Activated CD4-positive, alpha-beta memory T cell treated with anti-CD3 and anti-CD28 coated beads for 36 hours (primary cell): ENCODE measurements at regions of chr2 and their contacts with region 1.

Region 1: GRCh38 chr2:191013932-191014652 is at the start of gene STAT1:
- DNase-seq: peak; percentile 97
- H3K4me3 Mint-ChIP-seq: no peak within 1 kb of the TSS
- H3K27ac Mint-ChIP-seq: no peak within 1 kb of the TSS
- H3K4me1 Mint-ChIP-seq: peaks cover 39% of the 10 kb centered on the region
- H3K27me3 Mint-ChIP-seq: no peaks in the 10 kb centered on the region
- total RNA-seq, gene STAT1: 309 to 314 TPM

Region 2: GRCh38 chr2:190979906-190980629 is 34.0 kb before region 1 on chr2:
- CTCF ChIA-PET with region 1: no interaction called
- POLR2A ChIA-PET with region 1: interaction called, 3 read pairs
- intact Hi-C with region 1: loop called (anchors 5 kb)
- DNase-seq: no peak
- H3K4me3 Mint-ChIP-seq: no peak overlapping the region
- H3K27ac Mint-ChIP-seq: peak overlapping the region; percentile 54
- H3K4me1 Mint-ChIP-seq: peaks cover 61% of the 10 kb centered on the region
- H3K27me3 Mint-ChIP-seq: no peaks in the 10 kb centered on the region

Region 3: DNA sequence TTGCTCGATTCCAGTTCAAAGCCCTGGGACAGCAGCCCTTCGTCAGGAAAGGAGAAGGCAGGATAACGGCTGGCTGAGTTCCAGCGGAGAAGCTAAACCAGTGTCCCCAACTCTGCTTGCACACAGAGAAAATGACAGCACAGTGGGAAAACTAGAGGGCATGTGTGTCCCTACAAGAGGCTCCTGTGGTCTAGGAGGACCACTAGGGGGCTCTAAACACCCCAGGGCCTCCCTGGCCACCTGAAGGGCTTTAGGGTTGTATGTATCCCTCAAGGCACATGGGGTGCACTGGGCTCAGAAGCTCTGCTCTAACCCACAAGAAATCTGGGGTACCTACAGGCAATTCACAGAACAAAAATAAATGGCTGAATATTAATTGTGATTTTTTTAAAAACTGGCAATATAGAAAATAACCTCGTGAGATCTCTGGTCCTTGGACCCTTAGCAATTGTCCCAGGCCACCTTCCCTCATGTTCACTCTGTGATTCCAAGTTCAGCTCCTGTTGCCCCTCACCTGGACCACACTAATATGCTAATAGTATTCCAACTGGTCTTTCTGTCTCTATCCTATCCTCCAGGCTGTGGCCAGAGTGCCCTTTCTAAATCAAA is 17.6 kb before region 1 on chr2:
- CTCF ChIA-PET with region 1: interaction called, 4 read pairs
- POLR2A ChIA-PET with region 1: interaction called, 5 read pairs
- intact Hi-C with region 1: loop called (anchors 1 kb)
- DNase-seq: no peak
- H3K4me3 Mint-ChIP-seq: no peak overlapping the region
- H3K27ac Mint-ChIP-seq: peak overlapping the region; percentile 86
- H3K4me1 Mint-ChIP-seq: peaks cover 52% of the 10 kb centered on the region
- H3K27me3 Mint-ChIP-seq: no peaks in the 10 kb centered on the region

Region 4: DNA sequence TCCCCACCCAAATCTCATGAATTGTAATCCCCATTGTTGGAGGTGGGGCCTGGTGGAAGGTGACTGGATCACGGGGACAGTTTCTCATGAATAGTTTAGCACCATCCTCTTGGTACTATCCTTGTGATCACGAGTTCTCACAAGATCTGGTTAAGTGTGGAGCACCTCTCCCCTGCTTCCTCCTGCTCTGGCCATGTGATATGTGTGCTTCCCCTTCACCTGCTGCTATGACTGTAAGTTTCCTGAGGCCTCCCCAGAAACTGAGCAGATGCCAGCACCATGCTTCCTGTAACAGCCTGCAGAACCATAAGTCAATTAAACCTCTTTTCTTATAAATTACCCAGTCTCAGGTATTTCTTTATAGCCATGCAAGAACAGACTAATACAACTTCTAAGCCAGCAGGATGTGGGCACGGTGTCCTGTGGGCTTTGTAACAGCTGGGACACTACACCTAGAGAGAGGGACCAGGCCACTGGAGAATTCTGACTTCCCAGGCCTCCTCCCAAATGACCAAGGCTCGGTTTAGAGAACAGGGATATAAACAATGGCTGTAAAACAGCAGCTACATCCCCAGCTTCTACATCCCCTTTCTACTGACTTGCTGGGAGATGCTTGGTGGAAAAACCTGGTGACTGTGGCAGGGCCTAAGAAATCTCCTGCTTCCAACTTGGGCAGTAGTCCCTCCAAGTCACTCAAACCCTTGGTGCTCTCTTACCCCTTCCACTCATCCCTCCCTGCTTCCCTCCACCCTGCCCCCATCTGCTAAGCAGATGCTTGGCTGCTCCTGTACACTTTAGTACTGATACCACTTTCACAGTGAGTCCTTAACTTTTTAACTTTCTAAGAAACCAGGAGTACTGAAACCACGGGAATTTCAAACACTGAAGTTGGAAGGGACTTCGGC is 10.4 kb before region 1 on chr2:
- CTCF ChIA-PET with region 1: interaction called, 3 read pairs
- POLR2A ChIA-PET with region 1: interaction called, 12 read pairs
- intact Hi-C with region 1: loop called (anchors 1 kb)
- DNase-seq: no peak
- H3K4me3 Mint-ChIP-seq: no peak overlapping the region
- H3K27ac Mint-ChIP-seq: peak overlapping the region; percentile 63
- H3K4me1 Mint-ChIP-seq: peaks cover 83% of the 10 kb centered on the region
- H3K27me3 Mint-ChIP-seq: no peaks in the 10 kb centered on the region

Region 5: DNA sequence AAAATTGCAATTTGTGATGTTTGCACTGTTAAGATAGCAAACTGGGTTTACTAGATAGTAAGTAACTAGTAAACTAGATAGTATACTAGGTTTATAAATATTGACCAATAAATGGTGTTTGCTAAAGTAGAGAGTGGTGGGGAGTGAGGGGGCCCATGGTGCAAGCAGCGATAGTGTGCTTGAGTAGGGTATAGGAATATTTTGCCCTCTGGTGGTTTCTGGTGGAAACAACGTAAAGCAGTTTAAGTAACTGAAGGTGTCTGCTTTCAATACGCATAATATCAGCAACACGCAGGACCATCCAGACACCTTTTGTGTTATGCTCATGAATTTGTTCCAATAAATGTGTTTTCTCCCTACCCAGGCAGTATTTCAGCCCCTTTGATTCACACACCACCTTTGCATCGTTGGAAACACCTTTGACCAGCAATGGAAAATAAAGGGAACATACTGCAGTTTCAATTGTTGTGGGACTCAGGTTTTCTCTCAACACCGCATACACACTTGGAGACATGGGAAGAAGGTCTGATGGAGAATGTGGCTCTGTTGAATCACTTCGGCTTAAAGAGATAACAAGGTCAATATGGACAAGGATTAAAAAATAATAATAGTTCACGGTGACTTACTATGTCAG is 16.5 kb after region 1 on chr2:
- CTCF ChIA-PET with region 1: interaction called, 8 read pairs
- POLR2A ChIA-PET with region 1: interaction called, 8 read pairs
- intact Hi-C with region 1: loop called (anchors 1 kb)
- DNase-seq: peak; percentile 41
- H3K4me3 Mint-ChIP-seq: no peak overlapping the region
- H3K27ac Mint-ChIP-seq: peak overlapping the region; percentile 18
- H3K4me1 Mint-ChIP-seq: peaks cover 47% of the 10 kb centered on the region
- H3K27me3 Mint-ChIP-seq: no peaks in the 10 kb centered on the region

Region 6: GRCh38 chr2:191748059-191748461 is 734.0 kb after region 1 on chr2:
- CTCF ChIA-PET with region 1: no interaction called
- POLR2A ChIA-PET with region 1: no interaction called
- intact Hi-C with region 1: no loop called
- DNase-seq: no peak
- H3K4me3 Mint-ChIP-seq: no peak overlapping the region
- H3K27ac Mint-ChIP-seq: no peak overlapping the region
- H3K4me1 Mint-ChIP-seq: peaks cover 15% of the 10 kb centered on the region
- H3K27me3 Mint-ChIP-seq: peaks cover 4% of the 10 kb centered on the region